OCI-LY7 (cell line): ENCODE measurements at regions of chr10 and their contacts with region 1.

Region 1: GRCh38 chr10:70508912-70509756 is 30.6 kb downstream of the PALD1 start:
- DNase-seq: peak; percentile 83
- H3K4me3 ChIP-seq: peak overlapping the region; percentile 6
- H3K27ac ChIP-seq: peak overlapping the region; percentile 54
- H3K4me1 ChIP-seq: peaks cover 79% of the 10 kb centered on the region
- CTCF ChIP-seq: no peak

Region 2: DNA sequence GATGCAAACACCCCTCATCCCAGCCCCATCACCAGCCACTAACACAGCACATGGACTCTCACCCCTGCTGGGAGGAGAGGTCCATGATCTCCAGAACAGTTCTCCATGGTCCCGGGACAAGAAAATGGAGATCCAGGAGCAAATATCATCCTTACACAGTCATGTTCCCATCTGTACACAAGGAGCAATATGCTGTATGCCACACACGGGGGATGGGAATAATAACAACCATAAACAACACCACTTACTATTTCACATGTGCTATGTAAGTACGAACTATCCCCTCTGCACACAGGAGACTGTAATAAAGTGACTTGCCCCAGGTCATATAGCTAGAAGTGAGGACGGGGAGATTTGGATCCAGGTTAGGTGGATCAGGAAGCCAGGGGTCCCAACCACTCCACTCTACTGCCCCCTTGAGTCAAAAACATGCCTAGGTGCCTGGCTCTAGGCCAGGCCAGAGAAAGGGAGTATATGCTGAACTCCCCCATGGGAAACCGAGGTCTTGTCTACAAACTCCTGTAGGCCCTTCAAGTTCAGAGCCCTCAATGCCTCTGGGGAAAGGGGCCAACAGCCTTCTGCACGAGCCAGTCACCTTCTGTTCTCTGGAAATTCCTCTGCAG is 160.8 kb before region 1 on chr10:
- CTCF ChIA-PET with region 1: no interaction called
- POLR2A ChIA-PET with region 1: no interaction called
- intact Hi-C with region 1: no loop called
- DNase-seq: peak; percentile 77
- H3K4me3 ChIP-seq: no peak overlapping the region
- H3K27ac ChIP-seq: no peak overlapping the region
- H3K4me1 ChIP-seq: peaks cover 20% of the 10 kb centered on the region
- CTCF ChIP-seq: peak; percentile 97

Region 3: GRCh38 chr10:70478191-70479164 is 30.7 kb before region 1 on chr10 and contains the start of gene PALD1:
- CTCF ChIA-PET with region 1: interaction called, 4 read pairs
- POLR2A ChIA-PET with region 1: interaction called, 6 read pairs
- intact Hi-C with region 1: loop called (anchors 1 kb)
- DNase-seq: peak; percentile 81
- H3K4me3 ChIP-seq: peak within 1 kb of the TSS; percentile 95
- H3K27ac ChIP-seq: peak within 1 kb of the TSS; percentile 74
- H3K4me1 ChIP-seq: peaks cover 62% of the 10 kb centered on the region
- CTCF ChIP-seq: no peak
- total RNA-seq, gene PALD1: 41.6 and 52.7 TPM in 2 replicates

Region 4: DNA sequence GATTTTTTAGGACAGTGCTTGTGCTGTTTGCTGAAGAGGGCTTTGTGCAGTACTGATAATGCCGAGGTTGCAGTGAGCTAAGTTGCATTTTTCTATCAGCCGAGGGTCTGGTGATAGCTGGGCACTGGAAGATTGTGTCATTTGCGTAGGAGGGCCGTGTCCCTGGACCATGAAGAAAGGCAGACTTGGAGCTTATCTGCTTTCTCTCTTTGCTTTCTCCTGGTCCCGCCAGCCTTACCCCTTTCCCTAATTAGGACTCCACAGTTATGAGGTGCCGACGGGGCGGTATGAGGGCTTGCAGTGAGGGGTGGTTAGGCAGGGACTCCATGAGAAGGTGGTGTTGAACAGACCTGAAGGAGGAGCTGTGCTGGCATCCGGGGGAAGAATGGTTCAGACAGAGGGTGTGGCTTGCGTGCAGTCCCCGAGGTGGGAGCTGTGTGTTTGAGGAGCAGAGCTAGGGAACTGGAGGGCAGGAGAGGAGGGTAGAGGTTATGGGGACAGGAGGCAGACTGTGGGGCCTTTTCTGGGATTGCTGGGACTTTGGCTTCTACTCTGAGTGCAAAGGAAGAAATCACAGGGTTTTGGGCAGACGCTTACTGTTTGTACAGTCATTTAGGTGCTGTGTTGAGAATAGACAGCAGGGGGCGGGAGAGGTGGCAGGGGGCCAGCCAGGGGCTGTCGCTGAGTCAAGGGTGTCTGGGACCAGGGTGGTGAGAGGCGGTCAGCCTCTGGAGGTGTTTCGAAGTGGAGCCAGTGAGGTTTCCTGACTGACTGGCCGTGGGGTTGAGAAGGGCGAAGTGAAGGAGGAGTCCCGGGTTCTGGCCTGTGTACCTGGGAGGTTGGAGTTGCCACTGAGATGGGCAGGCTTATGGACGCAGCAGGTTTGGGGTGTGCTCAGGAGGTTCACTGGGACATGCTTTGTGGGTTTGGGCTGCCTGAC is 50.0 kb after region 1 on chr10:
- CTCF ChIA-PET with region 1: no interaction called
- POLR2A ChIA-PET with region 1: no interaction called
- intact Hi-C with region 1: no loop called
- DNase-seq: peak; percentile 72
- H3K4me3 ChIP-seq: no peak overlapping the region
- H3K27ac ChIP-seq: peak overlapping the region; percentile 73
- H3K4me1 ChIP-seq: peaks cover 74% of the 10 kb centered on the region
- CTCF ChIP-seq: peak; percentile 83